K562 (cell line): ENCODE measurements at regions of chr11 and their contacts with region 1.

Region 1: GRCh38 chr11:96424693-96425092 is 34.9 kb downstream of the JRKL start:
- DNase-seq: no peak
- ATAC-seq: no peak
- H3K4me3 ChIP-seq: no peak overlapping the region
- H3K27ac ChIP-seq: no peak overlapping the region
- H3K4me1 ChIP-seq: no peaks in the 10 kb centered on the region
- H3K27me3 ChIP-seq: no peaks in the 10 kb centered on the region
- CTCF ChIP-seq: no peak
- EP300 ChIP-seq: no peak
- POLR2A ChIP-seq: no peak
- RAD21 ChIP-seq: no peak

Region 2: DNA sequence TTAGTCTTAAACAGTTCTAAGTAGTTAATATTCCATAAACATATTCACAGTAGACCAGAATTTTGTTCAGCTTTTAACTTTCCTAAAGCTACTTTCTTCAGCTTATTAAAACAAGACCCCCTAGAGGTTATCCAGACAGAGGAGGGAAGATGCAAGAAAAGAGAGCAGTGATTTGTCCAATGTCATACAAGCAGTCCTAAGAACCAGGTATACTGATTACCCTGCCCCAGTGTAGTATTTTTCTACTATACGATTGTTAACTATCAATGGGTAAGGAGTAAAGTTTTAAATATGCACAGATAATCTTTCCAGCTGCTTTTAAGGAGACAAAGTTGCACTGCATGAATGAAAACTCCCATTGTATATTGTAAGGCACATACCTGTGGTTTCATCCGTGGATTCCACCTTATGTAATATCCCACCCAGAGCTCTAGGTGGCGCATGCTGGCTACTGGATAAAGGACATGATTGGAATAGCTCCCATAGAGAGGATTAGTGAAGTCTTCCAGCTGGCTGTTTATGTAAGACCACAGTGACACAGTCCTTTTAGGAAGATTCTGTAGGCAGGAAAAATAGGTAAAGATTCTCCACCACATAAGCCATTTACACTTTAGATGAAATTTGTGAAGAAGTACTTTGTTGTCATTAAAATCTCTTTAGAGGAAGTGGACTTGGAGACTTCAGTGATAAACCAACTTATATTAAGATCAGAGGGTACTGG is 588.8 kb before region 1 on chr11:
- CTCF ChIA-PET with region 1: interaction called, 8 read pairs
- POLR2A ChIA-PET with region 1: no interaction called
- in situ Hi-C with region 1: loop called (anchors 10 kb)
- intact Hi-C with region 1: loop called (anchors 2 kb)
- DNase-seq: peak; percentile 49 to 80 (median 64)
- ATAC-seq: peak; percentile 98
- H3K4me3 ChIP-seq: no peak overlapping the region
- H3K27ac ChIP-seq: no peak overlapping the region
- H3K4me1 ChIP-seq: no peaks in the 10 kb centered on the region
- H3K27me3 ChIP-seq: no peaks in the 10 kb centered on the region
- CTCF ChIP-seq: peak; percentile 81 to 88 (median 88)
- EP300 ChIP-seq: no peak
- POLR2A ChIP-seq: no peak
- RAD21 ChIP-seq: peak; percentile 75 to 85

Region 3: DNA sequence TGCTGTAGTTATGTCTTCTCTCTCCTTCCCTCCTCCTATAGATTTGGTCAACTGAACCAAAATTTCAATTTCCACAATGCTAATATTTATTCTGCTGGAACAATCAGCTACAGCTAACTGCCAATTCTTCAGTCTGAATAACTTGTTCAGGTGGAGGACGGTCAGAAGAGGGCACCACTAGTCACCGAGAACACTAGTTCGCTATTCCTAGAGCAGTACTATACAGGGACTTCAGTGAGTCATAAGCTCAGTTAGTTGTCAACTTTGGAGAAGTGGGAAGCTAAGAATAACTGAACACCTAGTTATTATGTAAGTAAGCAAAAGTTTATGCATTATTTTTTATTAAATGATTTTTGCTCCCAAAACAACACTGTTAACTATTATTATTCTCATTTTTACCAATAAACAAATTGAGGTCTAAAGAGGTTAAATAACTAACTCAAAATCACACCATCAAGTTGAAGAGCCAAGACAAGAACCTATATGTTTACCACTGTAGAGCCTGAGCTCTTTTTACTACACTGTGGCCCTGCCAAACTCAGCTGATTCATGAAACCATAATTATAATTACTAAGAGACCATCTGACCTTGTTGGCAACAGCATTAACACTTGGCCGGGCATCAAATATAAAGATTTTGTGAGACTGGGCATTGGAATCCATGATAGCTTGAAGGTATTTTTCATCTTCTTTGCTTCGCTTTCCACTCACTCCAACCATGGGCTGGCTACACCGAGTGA is 575.4 kb before region 1 on chr11:
- CTCF ChIA-PET with region 1: interaction called, 9 read pairs
- POLR2A ChIA-PET with region 1: no interaction called
- in situ Hi-C with region 1: loop called (anchors 10 kb)
- intact Hi-C with region 1: no loop called
- DNase-seq: peak; percentile 18 to 65 (median 30)
- ATAC-seq: peak; percentile 96
- H3K4me3 ChIP-seq: no peak overlapping the region
- H3K27ac ChIP-seq: no peak overlapping the region
- H3K4me1 ChIP-seq: no peaks in the 10 kb centered on the region
- H3K27me3 ChIP-seq: no peaks in the 10 kb centered on the region
- CTCF ChIP-seq: peak; percentile 50 to 70 (median 61)
- EP300 ChIP-seq: no peak
- POLR2A ChIP-seq: no peak
- RAD21 ChIP-seq: peak; percentile 77 to 85

Region 4: GRCh38 chr11:96306933-96307775 is 117.5 kb before region 1 on chr11:
- CTCF ChIA-PET with region 1: no interaction called
- POLR2A ChIA-PET with region 1: no interaction called
- in situ Hi-C with region 1: no loop called
- intact Hi-C with region 1: no loop called
- DNase-seq: peak; percentile 25 to 71 (median 28)
- ATAC-seq: peak; percentile 73
- H3K4me3 ChIP-seq: no peak overlapping the region
- H3K27ac ChIP-seq: peak overlapping the region; percentile 15; the same call in 1 of the 3 replicates
- H3K4me1 ChIP-seq: peaks cover 8 to 53% of the 10 kb centered on the region in 2 experiments
- H3K27me3 ChIP-seq: no peaks in the 10 kb centered on the region
- CTCF ChIP-seq: no peak
- EP300 ChIP-seq: no peak
- POLR2A ChIP-seq: no peak
- RAD21 ChIP-seq: no peak